ENCODE measurements at regions of chr16 and their contacts with region 1.

Region 1: DNA sequence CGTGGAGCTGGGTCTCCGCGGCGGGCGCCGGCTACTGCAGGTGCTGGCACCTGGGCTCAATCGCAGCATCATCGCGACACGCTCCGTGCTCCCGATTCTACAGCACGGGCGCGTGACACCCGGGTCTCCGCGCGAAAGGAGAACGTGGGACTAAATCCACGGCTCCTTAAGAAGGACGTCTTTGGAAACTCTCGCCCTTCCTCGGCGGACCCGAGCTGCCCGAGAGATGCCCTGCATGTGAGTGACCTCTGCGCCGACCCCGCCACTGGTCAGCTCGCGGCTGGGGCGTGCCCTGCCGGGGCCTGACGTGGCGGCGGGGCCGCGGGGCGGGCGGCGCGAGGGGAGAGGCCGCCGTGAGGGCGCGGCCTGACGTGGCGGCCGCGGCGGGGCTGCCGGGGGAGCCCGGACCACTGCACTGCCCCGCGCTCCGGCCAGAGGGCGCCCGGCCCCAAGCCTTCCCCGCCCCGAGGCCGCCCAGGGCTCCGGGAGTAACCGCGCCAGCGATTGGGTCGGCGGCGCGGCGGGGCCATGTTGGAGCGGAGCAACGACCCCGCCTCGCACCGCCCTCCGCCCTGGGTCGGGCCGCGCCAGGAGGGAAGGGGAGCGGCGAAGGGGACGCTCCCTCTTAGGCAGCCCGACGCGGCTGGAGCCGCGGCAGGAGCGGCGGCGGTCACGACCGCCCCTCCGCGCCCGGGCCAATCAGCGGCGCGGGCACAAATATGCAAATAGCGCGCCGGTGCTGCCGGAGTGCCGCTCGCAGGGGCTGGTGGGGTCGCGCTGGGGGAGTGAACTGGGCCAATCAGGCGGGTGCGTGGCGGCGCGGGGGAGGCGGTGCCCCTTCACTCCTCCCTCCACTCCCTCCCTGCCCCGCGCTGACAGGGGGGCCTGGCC is 75.6 kb downstream of the CHD9 start:
- DNase-seq: peak; percentile 93
- ATAC-seq: peak; percentile 83
- H3K4me3 Mint-ChIP-seq: peak overlapping the region; percentile 70
- H3K27ac Mint-ChIP-seq: peak overlapping the region; percentile 55
- H3K4me1 Mint-ChIP-seq: peaks cover 20% of the 10 kb centered on the region
- H3K27me3 Mint-ChIP-seq: peaks cover 3% of the 10 kb centered on the region

Region 2: DNA sequence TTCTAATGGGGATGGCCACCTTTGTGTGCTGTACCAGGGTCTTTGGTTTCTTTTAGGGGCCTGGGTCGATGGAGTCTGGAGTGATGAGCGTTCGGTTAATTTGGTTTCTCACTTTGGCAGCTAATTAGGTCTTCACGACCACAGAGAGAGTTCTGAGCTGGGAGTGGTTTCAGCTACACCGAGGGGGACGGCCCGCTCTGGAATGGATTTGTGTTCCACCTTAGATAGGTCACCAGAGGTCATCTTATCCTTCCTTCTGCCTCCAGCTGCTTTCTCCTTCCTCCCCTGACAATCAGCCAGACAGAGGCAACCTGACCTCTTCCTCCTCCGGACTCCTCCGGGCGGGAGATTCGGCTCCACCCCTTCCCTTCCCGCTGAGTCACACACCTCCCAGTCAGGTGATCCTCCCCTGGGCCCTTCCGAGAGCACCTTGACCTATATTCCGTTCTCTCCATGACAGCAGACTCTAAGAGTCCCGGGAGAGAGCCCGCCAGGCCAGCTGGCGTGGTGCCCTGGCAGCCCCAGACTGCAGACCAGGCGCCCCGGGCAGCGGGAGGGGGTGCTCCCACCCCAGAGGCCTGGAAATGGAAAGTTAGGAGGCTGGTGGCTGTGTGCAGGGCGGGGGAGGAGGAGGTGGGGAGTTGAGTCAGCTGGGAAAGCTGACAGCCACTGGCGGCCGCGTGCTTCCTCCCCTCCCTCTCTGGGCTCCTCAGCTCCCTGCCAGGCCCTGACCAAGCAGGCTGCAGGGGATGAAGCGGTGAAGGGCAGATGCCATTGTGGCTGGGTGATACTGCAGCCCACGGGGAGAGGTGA is 30.9 kb before region 1 on chr16:
- CTCF ChIA-PET with region 1: interaction called, 4 read pairs
- POLR2A ChIA-PET with region 1: no interaction called
- intact Hi-C with region 1: loop called (anchors 1 to 2 kb)
- DNase-seq: peak; percentile 69
- ATAC-seq: peak; percentile 82
- H3K4me3 Mint-ChIP-seq: peak overlapping the region; percentile 68
- H3K27ac Mint-ChIP-seq: peak overlapping the region; percentile 86
- H3K4me1 Mint-ChIP-seq: peaks cover 18% of the 10 kb centered on the region
- H3K27me3 Mint-ChIP-seq: no peaks in the 10 kb centered on the region

Region 3: GRCh38 chr16:53207810-53208752 is 77.7 kb after region 1 on chr16:
- CTCF ChIA-PET with region 1: no interaction called
- POLR2A ChIA-PET with region 1: no interaction called
- intact Hi-C with region 1: loop called (anchors 2 to 5 kb)
- DNase-seq: peak; percentile 24
- ATAC-seq: peak; percentile 55
- H3K4me3 Mint-ChIP-seq: peak overlapping the region; percentile 61
- H3K27ac Mint-ChIP-seq: peak overlapping the region; percentile 83
- H3K4me1 Mint-ChIP-seq: peaks cover 13% of the 10 kb centered on the region
- H3K27me3 Mint-ChIP-seq: no peaks in the 10 kb centered on the region

Region 4: GRCh38 chr16:53372992-53373871 is 242.8 kb after region 1 on chr16:
- CTCF ChIA-PET with region 1: no interaction called
- POLR2A ChIA-PET with region 1: no interaction called
- intact Hi-C with region 1: loop called in 1 of 2 experiments (anchors 1 kb)
- DNase-seq: peak; percentile 88
- ATAC-seq: peak; percentile 97
- H3K4me3 Mint-ChIP-seq: no peak overlapping the region
- H3K27ac Mint-ChIP-seq: peak overlapping the region; percentile 61
- H3K4me1 Mint-ChIP-seq: peaks cover 24% of the 10 kb centered on the region
- H3K27me3 Mint-ChIP-seq: no peaks in the 10 kb centered on the region

Region 5: GRCh38 chr16:53503270-53503923 is 373.0 kb after region 1 on chr16:
- CTCF ChIA-PET with region 1: interaction called, 3 read pairs
- POLR2A ChIA-PET with region 1: no interaction called
- intact Hi-C with region 1: loop called in 1 of 2 experiments (anchors 1 kb)
- DNase-seq: peak; percentile 100
- ATAC-seq: peak; percentile 92
- H3K4me3 Mint-ChIP-seq: peak overlapping the region; percentile 94
- H3K27ac Mint-ChIP-seq: peak overlapping the region; percentile 96
- H3K4me1 Mint-ChIP-seq: peaks cover 60% of the 10 kb centered on the region
- H3K27me3 Mint-ChIP-seq: no peaks in the 10 kb centered on the region

Region 6: DNA sequence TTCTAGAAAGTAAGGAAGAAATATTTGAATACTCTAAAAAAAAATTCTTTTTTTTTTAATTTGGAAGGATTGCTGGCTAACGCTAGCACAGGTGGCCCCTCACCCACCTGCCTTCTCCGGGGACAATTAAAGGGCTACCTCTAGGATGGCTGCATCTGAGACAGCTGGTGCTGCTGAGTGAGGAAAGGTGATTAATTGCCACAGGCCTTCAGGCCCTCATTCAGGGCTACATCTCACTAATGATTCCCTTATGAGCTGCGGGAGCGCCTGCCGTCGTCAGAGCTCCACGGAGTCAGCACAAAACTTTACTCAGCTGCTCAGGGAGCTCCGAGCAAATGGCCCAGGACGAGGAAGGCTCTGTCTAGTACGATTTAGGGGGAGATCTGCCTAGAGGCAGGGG is 399.6 kb after region 1 on chr16:
- CTCF ChIA-PET with region 1: no interaction called
- POLR2A ChIA-PET with region 1: no interaction called
- intact Hi-C with region 1: loop called in 1 of 2 experiments (anchors 1 kb)
- DNase-seq: no peak
- ATAC-seq: no peak
- H3K4me3 Mint-ChIP-seq: no peak overlapping the region
- H3K27ac Mint-ChIP-seq: no peak overlapping the region
- H3K4me1 Mint-ChIP-seq: peaks cover 13% of the 10 kb centered on the region
- H3K27me3 Mint-ChIP-seq: no peaks in the 10 kb centered on the region

Region 7: GRCh38 chr16:54929090-54930004 is 1798.9 kb after region 1 on chr16:
- CTCF ChIA-PET with region 1: no interaction called
- POLR2A ChIA-PET with region 1: no interaction called
- intact Hi-C with region 1: loop called in 1 of 2 experiments (anchors 2 kb)
- DNase-seq: peak; percentile 99
- ATAC-seq: peak; percentile 96
- H3K4me3 Mint-ChIP-seq: peak overlapping the region; percentile 72
- H3K27ac Mint-ChIP-seq: peak overlapping the region; percentile 62
- H3K4me1 Mint-ChIP-seq: peaks cover 32% of the 10 kb centered on the region
- H3K27me3 Mint-ChIP-seq: peaks cover 57% of the 10 kb centered on the region

Measured in activated CD4-positive, alpha-beta T cell treated with anti-CD3 and anti-CD28 coated beads for 36 hours (primary cell).